ENCODE measurements at regions of chr5 and their contacts with region 1.

Region 1: GRCh38 chr5:55994574-55995333 is at the start of gene IL6ST:
- DNase-seq: peak; percentile 90 to 99 (median 96)
- ATAC-seq: peak; percentile 86
- H3K4me3 ChIP-seq: peak within 1 kb of the TSS; percentile 95
- H3K4me3 Mint-ChIP-seq: peak within 1 kb of the TSS; percentile 97
- H3K27ac ChIP-seq: peak within 1 kb of the TSS; percentile 91 to 99
- H3K27ac Mint-ChIP-seq: peak within 1 kb of the TSS; percentile 94
- H3K4me1 ChIP-seq: peaks cover 13% of the 10 kb centered on the region
- H3K4me1 Mint-ChIP-seq: peaks cover 60% of the 10 kb centered on the region
- H3K27me3 ChIP-seq: no peaks in the 10 kb centered on the region
- H3K27me3 Mint-ChIP-seq: no peaks in the 10 kb centered on the region
- CTCF ChIP-seq: no peak
- total RNA-seq, gene IL6ST: 377 to 404 TPM

Region 2: GRCh38 chr5:55982957-55983381 is 11.8 kb before region 1 on chr5:
- CTCF ChIA-PET with region 1: interaction called, 11 read pairs
- POLR2A ChIA-PET with region 1: interaction called, 17 read pairs
- intact Hi-C with region 1: loop called in 1 of 2 experiments (anchors 1 kb)
- DNase-seq: peak in 7 of 14 experiments; percentile 18 to 71 (median 38)
- ATAC-seq: peak; percentile 44
- H3K4me3 ChIP-seq: peak overlapping the region; percentile 11
- H3K4me3 Mint-ChIP-seq: peak overlapping the region; percentile 72
- H3K27ac ChIP-seq: peak overlapping the region in 1 of 2 donors; percentile 10
- H3K27ac Mint-ChIP-seq: peak overlapping the region; percentile 94
- H3K4me1 ChIP-seq: peaks cover 31% of the 10 kb centered on the region
- H3K4me1 Mint-ChIP-seq: peaks cover 90% of the 10 kb centered on the region
- H3K27me3 ChIP-seq: no peaks in the 10 kb centered on the region
- H3K27me3 Mint-ChIP-seq: no peaks in the 10 kb centered on the region
- CTCF ChIP-seq: peak; percentile 66

Region 3: DNA sequence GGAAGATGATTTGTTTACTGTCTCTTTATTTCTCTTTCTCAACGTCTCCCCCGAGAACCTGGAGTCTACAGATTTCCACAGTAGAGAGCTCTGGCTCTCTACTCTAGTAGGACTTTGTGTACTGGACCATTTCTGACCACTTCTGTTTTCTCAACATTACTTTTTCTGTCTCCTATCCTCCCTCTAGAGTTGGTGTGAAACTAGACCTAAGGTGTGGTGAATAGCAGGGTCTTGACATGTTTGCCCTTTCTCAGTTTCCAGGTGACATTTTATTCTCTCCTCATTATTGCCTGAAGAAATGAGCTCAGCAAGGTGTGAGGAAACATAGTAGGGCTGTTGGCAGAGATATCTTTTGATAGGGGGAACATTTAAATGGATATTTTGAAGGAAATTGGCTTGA is 62.1 kb after region 1 on chr5:
- CTCF ChIA-PET with region 1: interaction called, 4 read pairs
- POLR2A ChIA-PET with region 1: interaction called, 87 read pairs
- intact Hi-C with region 1: loop called in 1 of 2 experiments (anchors 2 kb)
- DNase-seq: no peak
- ATAC-seq: no peak
- H3K4me3 ChIP-seq: no peak overlapping the region
- H3K4me3 Mint-ChIP-seq: peak overlapping the region; percentile 63
- H3K27ac ChIP-seq: peak overlapping the region; percentile 18 to 35
- H3K27ac Mint-ChIP-seq: peak overlapping the region; percentile 86
- H3K4me1 ChIP-seq: peaks cover 83% of the 10 kb centered on the region
- H3K4me1 Mint-ChIP-seq: peaks cover 74% of the 10 kb centered on the region
- H3K27me3 ChIP-seq: no peaks in the 10 kb centered on the region
- H3K27me3 Mint-ChIP-seq: no peaks in the 10 kb centered on the region
- CTCF ChIP-seq: no peak

Region 4: DNA sequence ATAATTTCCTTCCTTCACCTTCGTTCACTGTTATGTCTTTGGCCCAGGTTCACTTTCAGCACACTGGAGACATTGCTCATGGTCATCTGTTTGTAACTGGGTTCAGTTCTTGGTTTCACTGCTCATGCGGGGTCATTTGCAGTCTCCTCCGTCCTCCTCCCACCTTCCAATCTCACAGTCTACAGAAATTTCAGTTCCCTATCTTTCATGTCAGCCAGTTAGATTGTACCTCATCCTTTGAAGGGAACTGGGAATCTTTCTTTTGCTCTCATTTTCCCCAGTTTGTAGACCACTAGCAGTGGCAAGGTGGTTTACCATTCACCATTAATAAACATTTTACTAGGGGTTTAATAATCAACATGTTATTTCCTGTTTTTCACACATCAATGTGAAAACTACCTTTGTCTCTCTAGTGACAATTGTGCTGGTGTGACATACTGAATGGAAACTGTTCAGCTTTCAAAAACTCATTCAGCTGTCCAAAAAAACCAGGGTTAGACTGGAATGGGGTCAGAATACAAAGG is 100.9 kb after region 1 on chr5:
- CTCF ChIA-PET with region 1: interaction called, 3 read pairs
- POLR2A ChIA-PET with region 1: interaction called, 38 read pairs
- intact Hi-C with region 1: no loop called
- DNase-seq: no peak
- ATAC-seq: no peak
- H3K4me3 ChIP-seq: no peak overlapping the region
- H3K4me3 Mint-ChIP-seq: peak overlapping the region; percentile 30
- H3K27ac ChIP-seq: peak overlapping the region; percentile 7 to 63
- H3K27ac Mint-ChIP-seq: peak overlapping the region; percentile 88
- H3K4me1 ChIP-seq: peaks cover 71% of the 10 kb centered on the region
- H3K4me1 Mint-ChIP-seq: peaks cover 88% of the 10 kb centered on the region
- H3K27me3 ChIP-seq: no peaks in the 10 kb centered on the region
- H3K27me3 Mint-ChIP-seq: no peaks in the 10 kb centered on the region
- CTCF ChIP-seq: no peak

Region 5: DNA sequence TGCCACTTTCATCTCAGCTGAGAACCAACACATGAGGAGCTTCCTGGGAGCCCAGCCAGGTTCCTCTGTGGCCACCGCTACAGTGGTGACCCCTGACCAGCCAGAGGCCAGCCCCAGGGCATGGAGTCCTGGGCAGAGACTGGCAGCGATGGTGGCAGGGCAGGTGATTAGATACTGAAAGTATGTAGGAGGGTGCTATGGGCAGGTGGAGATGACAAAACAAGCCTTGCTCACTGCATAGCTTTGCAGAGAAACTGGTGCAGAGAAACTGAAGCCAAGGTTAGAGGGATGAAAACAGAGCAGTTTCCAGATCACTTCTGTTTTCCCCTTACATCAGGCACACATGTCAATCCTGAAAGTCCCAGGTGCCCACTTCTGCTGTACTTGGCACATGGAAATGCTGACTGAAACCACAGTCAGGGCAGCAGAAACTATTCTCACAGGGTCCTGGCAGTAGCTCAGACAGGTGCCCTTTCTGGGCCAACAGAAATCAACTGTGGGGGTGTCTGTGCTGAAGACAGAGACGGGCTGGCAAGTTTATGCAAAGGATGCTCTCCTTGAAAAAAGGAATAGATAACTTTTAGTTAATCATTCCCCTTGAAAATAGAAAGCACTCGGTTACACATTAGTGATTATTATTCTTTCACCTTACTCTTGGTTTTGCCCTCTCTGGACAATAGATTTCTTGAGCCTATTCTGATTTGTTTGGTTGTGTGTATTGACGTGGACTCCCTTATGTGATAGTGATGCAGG is 148.0 kb after region 1 on chr5:
- CTCF ChIA-PET with region 1: interaction called, 3 read pairs
- POLR2A ChIA-PET with region 1: interaction called, 17 read pairs
- intact Hi-C with region 1: loop called in 1 of 2 experiments (anchors 5 kb)
- DNase-seq: peak in 1 of 14 experiments; percentile 38
- ATAC-seq: peak; percentile 61
- H3K4me3 ChIP-seq: peak overlapping the region; percentile 15
- H3K4me3 Mint-ChIP-seq: peak overlapping the region; percentile 62
- H3K27ac ChIP-seq: peak overlapping the region; percentile 26 to 54
- H3K27ac Mint-ChIP-seq: peak overlapping the region; percentile 82
- H3K4me1 ChIP-seq: peaks cover 40% of the 10 kb centered on the region
- H3K4me1 Mint-ChIP-seq: peaks cover 83% of the 10 kb centered on the region
- H3K27me3 ChIP-seq: no peaks in the 10 kb centered on the region
- H3K27me3 Mint-ChIP-seq: no peaks in the 10 kb centered on the region
- CTCF ChIP-seq: no peak

Region 6: GRCh38 chr5:56200856-56201666 is 206.3 kb after region 1 on chr5:
- CTCF ChIA-PET with region 1: no interaction called
- POLR2A ChIA-PET with region 1: interaction called, 10 read pairs
- intact Hi-C with region 1: no loop called
- DNase-seq: peak; percentile 39 to 86 (median 50)
- ATAC-seq: peak; percentile 95
- H3K4me3 ChIP-seq: no peak overlapping the region
- H3K4me3 Mint-ChIP-seq: no peak overlapping the region
- H3K27ac ChIP-seq: no peak overlapping the region
- H3K27ac Mint-ChIP-seq: peak overlapping the region; percentile 2
- H3K4me1 ChIP-seq: peaks cover 6% of the 10 kb centered on the region
- H3K4me1 Mint-ChIP-seq: peaks cover 34% of the 10 kb centered on the region
- H3K27me3 ChIP-seq: no peaks in the 10 kb centered on the region
- H3K27me3 Mint-ChIP-seq: no peaks in the 10 kb centered on the region
- CTCF ChIP-seq: peak; percentile 85

Measured in CD4-positive, alpha-beta T cell (primary cell).